Adrenal gland (tissue), 19 donors: ENCODE measurements at regions of chr5 and their contacts with region 1.

Region 1: DNA sequence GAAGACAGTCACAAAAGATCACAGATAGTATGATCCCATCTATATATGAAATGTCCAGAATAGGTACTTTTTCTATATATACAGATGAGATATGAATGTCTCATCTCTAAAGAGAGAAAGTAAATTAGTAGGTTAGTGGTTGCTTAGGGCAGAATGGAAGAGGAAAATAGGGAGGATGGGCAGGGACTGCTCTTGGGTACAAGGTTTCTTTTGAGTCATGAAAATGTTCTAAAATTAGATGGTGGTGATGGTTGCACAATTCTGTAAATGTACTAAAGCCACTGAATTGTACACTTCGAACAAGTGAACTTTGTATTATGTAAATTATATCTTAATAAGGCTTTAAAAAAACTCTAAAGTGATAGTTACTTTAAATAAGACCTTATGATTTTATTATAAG is 59.6 kb upstream of the GRAMD2B start:
- DNase-seq: no peak
- H3K4me3 ChIP-seq: no peak overlapping the region
- H3K27ac ChIP-seq: no peak overlapping the region
- H3K4me1 ChIP-seq: peaks cover 6 to 7% of the 10 kb centered on the region in 2 donors
- H3K27me3 ChIP-seq: no peaks in the 10 kb centered on the region
- CTCF ChIP-seq: no peak
- POLR2A ChIP-seq: no peak

Region 2: DNA sequence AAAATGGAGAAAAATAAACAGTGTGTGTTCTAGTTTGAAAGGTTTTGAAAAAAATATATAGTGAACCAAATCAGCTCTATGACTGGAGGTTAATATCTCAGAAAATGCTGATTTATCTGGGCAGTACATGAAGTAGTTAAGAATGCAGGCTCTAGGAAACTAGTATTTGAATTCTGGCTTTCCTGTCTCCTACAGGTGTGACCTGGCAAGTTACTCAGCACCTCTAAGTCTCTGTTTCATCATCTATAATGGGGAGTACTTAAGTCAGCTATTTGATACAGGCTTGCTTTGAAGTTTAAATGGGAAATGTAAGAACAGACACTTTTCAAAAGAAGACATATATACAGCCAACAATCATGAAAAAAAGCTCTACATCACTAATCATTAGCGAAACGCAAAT is 64.8 kb after region 1 on chr5:
- intact Hi-C with region 1: loop called in 1 of 2 experiments (anchors 5 kb)
- DNase-seq: no peak
- H3K4me3 ChIP-seq: no peak overlapping the region
- H3K27ac ChIP-seq: no peak overlapping the region
- H3K4me1 ChIP-seq: peaks cover 0 to 22% of the 10 kb centered on the region in 2 donors
- H3K27me3 ChIP-seq: no peaks in the 10 kb centered on the region
- CTCF ChIP-seq: no peak
- POLR2A ChIP-seq: no peak